ENCODE measurements at regions of chr15 and their contacts with region 1.

Region 1: DNA sequence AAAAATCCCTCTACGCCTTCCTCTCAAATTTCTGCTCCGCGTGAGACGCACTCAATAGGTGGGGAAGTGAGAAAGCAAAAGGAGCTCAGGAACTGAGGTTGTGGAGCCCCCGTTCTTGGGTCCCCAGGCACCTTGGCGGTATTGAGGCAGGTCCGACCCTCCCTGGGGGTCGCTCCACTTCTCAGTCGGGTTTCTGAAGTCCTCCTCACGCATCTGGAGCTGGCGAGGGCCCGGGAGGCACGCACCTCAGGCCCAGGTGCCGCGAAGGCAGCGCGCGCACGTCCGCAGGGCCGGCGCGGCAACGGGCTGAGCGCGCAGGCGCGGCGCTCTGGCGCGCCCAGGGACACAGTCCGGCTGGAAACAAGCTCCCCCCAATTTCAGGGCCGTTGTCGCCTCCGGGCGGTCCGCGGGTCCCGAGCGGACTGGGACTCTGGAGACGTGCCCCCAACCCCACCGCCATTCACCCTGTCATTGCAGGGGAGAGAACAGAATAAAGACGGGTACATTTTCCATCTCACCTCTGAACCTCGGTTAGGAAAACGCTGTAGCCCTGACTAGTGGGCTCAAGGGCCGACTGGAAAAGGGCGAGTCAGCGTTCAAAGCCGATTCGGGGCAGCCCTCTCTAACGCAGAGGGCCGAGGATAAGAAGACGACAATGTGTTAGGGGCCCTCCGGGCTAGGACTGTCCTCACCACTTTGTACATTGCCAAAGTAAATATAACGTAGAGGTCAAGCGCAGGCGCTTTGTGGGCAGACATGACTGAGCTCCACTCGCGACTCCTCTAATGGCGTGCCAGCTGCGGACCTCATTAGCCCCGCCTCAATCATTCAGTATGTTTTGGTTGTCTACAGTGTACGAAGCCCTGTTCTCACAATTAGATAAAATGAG is at the start of gene ZNF770:
- DNase-seq: peak; percentile 15
- H3K4me3 ChIP-seq: peak within 1 kb of the TSS; percentile 65
- H3K27me3 ChIP-seq: no peaks in the 10 kb centered on the region
- CTCF ChIP-seq: no peak
- polyA plus RNA-seq, gene ZNF770: 8.6 and 16.0 TPM in 2 replicates

Region 2: GRCh38 chr15:34969340-34970097 is 18.7 kb before region 1 on chr15 and contains the start of gene AQR:
- CTCF ChIA-PET with region 1: interaction called, 20 read pairs
- POLR2A ChIA-PET with region 1: interaction called, 12 read pairs
- DNase-seq: peak; percentile 82
- H3K4me3 ChIP-seq: peak within 1 kb of the TSS; percentile 73
- H3K27me3 ChIP-seq: no peaks in the 10 kb centered on the region
- CTCF ChIP-seq: peak; percentile 86
- polyA plus RNA-seq, gene AQR: 15.3 and 24.7 TPM in 2 replicates